Thyroid gland (tissue), 4 donors: ENCODE measurements at regions of chr3 and their contacts with region 1.

Region 1: GRCh38 chr3:57100046-57100695 is 39.7 kb downstream of the SPATA12 start:
- DNase-seq: peak; percentile 61 to 68
- H3K4me3 ChIP-seq: no peak overlapping the region
- H3K27ac ChIP-seq: no peak overlapping the region
- H3K4me1 ChIP-seq: peaks cover 0 to 5% of the 10 kb centered on the region in 2 donors
- H3K27me3 ChIP-seq: no peaks in the 10 kb centered on the region
- CTCF ChIP-seq: peak; percentile 62 to 93 (median 82)
- POLR2A ChIP-seq: no peak

Region 2: DNA sequence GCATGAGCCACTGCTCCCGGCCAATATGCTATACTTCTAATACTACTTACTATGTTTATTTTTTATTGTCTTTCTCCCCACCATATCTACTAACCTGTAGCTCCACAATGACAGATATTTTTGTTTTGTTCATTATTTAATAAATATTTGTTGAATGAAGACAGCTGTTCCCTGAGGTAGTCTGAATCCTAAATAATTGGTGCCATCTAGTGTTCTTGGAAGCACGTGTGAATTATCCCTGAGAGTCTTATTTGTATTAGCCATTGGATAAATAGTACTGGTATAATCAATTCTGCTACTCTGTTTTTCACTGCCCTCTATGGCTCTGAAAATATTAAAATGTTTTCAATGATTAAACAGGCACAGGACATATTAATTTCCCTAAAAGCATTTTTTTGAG is 121.7 kb after region 1 on chr3:
- intact Hi-C with region 1: loop called (anchors 5 kb)
- DNase-seq: no peak
- H3K4me3 ChIP-seq: no peak overlapping the region
- H3K27ac ChIP-seq: no peak overlapping the region
- H3K4me1 ChIP-seq: no peaks in the 10 kb centered on the region
- H3K27me3 ChIP-seq: no peaks in the 10 kb centered on the region
- CTCF ChIP-seq: no peak
- POLR2A ChIP-seq: no peak

Region 3: GRCh38 chr3:57575966-57576626 is 475.9 kb after region 1 on chr3:
- intact Hi-C with region 1: no loop called
- DNase-seq: no peak
- H3K4me3 ChIP-seq: no peak overlapping the region
- H3K27ac ChIP-seq: peak overlapping the region in 1 of 3 donors; percentile 67
- H3K4me1 ChIP-seq: peaks cover 14 to 17% of the 10 kb centered on the region in 2 donors
- H3K27me3 ChIP-seq: no peaks in the 10 kb centered on the region
- CTCF ChIP-seq: no peak
- POLR2A ChIP-seq: no peak